Posterior vena cava (tissue), 2 donors: ENCODE measurements at regions of chr13 and their contacts with region 1.

Region 1: DNA sequence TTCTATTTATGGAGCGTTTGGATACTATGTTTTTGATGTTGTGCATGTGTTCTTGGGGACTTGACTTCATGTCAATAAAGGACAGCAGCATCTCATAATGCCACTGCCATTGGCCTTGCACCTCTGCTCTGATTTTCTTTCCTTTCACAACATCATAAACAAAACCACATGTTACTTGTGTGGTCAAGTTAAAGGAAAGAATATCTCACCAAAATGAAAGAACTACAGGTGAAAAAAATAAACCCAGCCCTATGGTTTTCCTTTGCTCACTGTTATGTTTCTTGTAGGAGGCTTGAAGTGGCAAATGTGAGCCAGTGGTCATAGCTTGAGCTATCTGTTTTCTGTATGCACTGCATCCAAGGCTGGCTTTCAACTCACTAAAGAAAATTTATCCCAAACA is 240.4 kb downstream of the KCNRG start:
- DNase-seq: no peak

Region 2: GRCh38 chr13:50224534-50224933 is 31.1 kb before region 1 on chr13:
- intact Hi-C with region 1: no loop called
- DNase-seq: no peak

Region 3: DNA sequence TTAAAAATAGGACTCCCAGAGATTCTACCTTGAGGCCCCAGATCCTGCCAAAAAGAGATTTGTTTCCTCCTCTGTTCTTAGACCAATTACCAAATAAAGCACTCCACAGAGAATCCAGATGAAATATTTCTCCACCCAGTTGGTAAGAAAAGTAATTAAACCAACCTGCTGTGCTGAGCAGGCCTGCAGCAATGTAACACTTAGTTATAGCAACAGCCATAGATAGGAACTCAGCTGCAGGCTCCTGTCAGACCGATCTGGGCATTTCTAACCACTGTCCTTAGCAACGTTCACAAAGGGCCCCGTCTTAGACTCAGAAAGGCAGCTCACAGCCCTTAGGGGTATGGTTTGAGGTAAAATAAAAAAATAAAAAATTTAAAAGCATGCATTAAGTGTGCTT is 30.7 kb after region 1 on chr13:
- intact Hi-C with region 1: loop called in 1 of 2 experiments (anchors 1 kb)
- DNase-seq: no peak

Region 4: GRCh38 chr13:50401049-50401505 is 145.4 kb after region 1 on chr13:
- intact Hi-C with region 1: no loop called
- DNase-seq: no peak

Region 5: GRCh38 chr13:50549221-50549942 is 293.7 kb after region 1 on chr13:
- intact Hi-C with region 1: no loop called
- DNase-seq: no peak